ENCODE measurements at regions of chr3 and their contacts with region 1.

Region 1: DNA sequence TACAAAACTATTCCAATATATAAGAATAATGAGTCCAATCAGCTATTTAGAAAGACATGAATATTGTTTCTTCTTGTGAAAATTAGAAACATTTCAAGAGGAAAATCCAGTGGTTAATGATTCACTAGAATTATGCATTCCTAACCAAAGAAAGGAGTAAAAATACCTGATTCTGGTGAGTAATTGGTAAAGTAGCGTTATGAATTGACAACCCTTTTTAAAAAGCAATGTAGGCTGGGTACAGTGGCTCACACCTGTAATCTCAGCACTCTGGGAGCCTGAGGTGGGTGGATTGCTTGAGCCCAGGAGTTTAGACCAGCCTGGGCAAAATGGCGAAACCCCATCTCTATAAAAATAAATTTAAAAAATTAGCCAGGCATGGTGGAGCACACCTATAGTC is 43.3 kb downstream of the TOPAZ1 start:
- DNase-seq: no peak
- ATAC-seq: no peak
- H3K4me3 ChIP-seq: no peak overlapping the region
- H3K27ac ChIP-seq: no peak overlapping the region
- H3K4me1 ChIP-seq: no peaks in the 10 kb centered on the region
- H3K27me3 ChIP-seq: no peaks in the 10 kb centered on the region; the same call in 1 of the 2 replicates
- CTCF ChIP-seq: no peak

Region 2: DNA sequence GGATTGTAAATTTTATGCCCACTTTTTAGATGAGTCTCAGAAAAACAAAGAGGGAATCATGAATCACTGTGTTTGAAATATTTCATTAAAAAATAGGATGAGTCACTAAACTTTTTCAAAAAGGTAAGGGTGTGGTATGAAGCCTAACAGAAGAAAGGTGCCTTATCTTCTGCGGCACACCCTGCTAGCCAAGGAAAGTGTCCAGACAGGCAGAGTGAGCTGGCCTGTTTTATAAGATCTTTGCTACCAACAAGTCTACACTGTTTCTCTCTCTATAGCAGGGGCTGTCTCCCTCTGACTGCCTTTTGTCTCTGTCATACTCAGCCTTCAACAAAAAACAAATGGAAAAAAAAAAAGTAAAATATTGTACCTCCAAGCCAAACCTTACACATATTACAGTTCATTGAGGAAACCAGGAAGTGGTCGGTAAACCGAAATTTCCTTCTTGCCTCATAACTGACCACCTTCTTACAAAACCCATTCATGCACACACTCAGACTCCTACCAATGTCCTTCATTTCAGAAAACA is 681.9 kb after region 1 on chr3:
- CTCF ChIA-PET with region 1: no interaction called
- POLR2A ChIA-PET with region 1: interaction called, 11 read pairs
- in situ Hi-C with region 1: no loop called
- intact Hi-C with region 1: no loop called
- DNase-seq: no peak
- ATAC-seq: no peak
- H3K4me3 ChIP-seq: no peak overlapping the region
- H3K27ac ChIP-seq: no peak overlapping the region
- H3K4me1 ChIP-seq: no peaks in the 10 kb centered on the region
- H3K27me3 ChIP-seq: no peaks in the 10 kb centered on the region
- CTCF ChIP-seq: no peak

Measured in Panc1 (cell line).